OCI-LY7 (cell line): ENCODE measurements at regions of chr16 and their contacts with region 1.

Region 1: GRCh38 chr16:46883690-46884512 is at the start of gene GPT2:
- DNase-seq: peak; percentile 96
- H3K4me3 ChIP-seq: peak within 1 kb of the TSS; percentile 95
- H3K27ac ChIP-seq: peak within 1 kb of the TSS; percentile 50
- H3K4me1 ChIP-seq: peaks cover 30% of the 10 kb centered on the region
- CTCF ChIP-seq: no peak
- total RNA-seq, gene GPT2: 30.2 and 42.5 TPM in 2 replicates

Region 2: GRCh38 chr16:46830902-46831647 is 52.8 kb before region 1 on chr16 and contains the start of gene C16orf87:
- CTCF ChIA-PET with region 1: no interaction called
- POLR2A ChIA-PET with region 1: interaction called, 9 read pairs
- intact Hi-C with region 1: loop called (anchors 1 kb)
- DNase-seq: peak; percentile 96
- H3K4me3 ChIP-seq: peak within 1 kb of the TSS; percentile 90
- H3K27ac ChIP-seq: peak within 1 kb of the TSS; percentile 80
- H3K4me1 ChIP-seq: peaks cover 65% of the 10 kb centered on the region
- CTCF ChIP-seq: no peak
- total RNA-seq, gene C16orf87: 9.1 and 14.9 TPM in 2 replicates

Region 3: DNA sequence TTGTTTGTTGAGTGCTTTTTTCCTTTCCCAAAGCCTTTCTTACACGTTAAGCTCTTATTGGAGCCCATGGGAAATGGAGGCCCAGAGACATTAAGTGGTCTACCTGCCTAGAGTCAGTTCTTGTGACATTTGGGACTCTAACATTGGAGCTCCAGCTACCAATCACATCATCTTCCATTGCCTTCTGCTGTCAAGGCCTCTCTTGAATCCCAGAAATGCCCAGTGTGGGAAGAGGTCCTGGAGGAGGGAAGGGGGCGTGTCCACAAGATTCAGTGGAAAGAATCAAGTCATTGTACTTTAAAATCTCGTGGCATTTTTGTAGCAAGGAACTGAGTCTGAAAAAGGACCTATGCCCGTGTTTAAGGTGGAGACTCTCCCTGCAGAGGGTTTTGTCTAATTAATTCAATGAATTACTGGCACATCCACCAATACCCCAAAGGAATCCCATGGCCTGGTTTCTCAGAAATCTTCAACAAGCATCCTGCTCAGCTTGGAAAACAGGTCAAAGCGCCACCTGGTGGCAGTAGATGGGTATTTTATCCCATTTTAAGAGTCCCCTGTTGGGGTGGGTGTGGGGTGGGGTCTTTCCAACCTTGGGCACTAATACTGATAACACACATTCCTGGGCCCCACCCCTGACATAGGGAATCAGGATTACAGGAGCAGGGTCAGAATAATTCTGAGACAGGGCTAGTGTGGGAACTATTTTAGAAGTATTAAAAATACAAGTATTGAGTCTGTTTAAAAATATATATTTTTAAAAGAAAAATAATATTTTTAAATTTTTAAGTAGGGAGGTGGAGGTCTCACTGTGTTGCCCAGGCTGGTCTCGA is 24.9 kb after region 1 on chr16:
- CTCF ChIA-PET with region 1: interaction called, 3 read pairs
- POLR2A ChIA-PET with region 1: interaction called, 4 read pairs
- intact Hi-C with region 1: loop called (anchors 2 kb)
- DNase-seq: peak; percentile 79
- H3K4me3 ChIP-seq: no peak overlapping the region
- H3K27ac ChIP-seq: no peak overlapping the region
- H3K4me1 ChIP-seq: peaks cover 8% of the 10 kb centered on the region
- CTCF ChIP-seq: peak; percentile 85